ENCODE measurements at regions of chr9 and their contacts with region 1.

Region 1: DNA sequence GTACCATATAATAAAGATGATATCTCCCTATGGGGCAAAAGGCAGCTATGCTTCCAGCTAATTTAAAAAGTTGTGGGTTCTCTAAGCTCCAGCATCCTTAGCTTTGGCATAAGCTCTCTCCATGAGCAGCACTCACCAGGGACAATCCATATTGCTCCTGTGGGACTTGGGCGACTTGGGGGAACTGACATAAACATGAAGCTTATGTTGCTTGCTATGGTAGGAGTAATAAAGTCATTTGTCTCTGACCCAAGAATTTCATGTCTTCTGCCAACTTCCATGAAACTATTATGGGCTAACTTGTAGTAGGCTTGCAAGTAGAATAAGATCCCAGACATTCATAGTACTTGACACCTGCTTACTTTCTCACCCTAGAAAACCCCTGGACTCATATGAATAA is 36.2 kb upstream of the TLE4 start:
- DNase-seq: no peak

Region 2: DNA sequence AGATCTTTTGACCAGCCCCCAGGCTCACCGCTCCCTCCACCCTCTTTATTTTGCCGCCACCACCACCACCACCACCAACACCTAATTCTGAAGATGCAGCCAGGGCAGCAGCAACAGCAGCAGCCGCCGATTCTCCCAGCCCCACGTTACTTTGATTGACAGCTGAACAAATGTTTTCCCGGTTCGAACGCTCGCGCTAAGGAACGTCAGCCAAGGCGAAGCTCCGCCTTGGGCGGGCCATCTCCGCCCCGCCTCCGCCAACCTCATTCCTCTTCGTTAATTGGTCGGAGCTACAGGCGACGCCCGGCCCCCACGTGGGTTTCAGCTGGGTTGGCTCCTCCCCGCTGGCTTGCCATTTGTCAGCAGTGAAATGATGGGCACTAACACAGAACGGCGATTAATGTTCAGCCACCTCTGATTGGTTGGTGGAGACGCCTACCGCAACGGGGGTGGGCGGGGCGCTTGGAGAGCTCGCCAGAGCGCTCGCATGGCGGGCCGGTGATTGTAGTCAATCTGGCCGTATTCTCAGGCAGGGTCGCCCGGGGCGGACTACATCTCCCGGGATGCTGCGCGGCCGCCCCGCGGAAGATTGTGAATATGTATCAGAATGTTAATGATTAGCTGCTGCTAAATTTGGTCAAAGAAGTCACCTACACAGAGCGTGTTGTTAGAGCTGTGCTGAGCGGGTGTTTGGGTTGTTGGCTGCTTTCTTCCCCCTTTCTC is 35.9 kb after region 1 on chr9 and contains the start of gene TLE4:
- intact Hi-C with region 1: no loop called
- DNase-seq: peak; percentile 100
- total RNA-seq, gene TLE4: 24.2 to 34.9 TPM

Region 3: GRCh38 chr9:80028501-80028900 is 493.0 kb after region 1 on chr9:
- intact Hi-C with region 1: loop called in 1 of 2 experiments (anchors 10 kb)
- DNase-seq: no peak